ENCODE measurements at regions of chr1 and their contacts with region 1.

Region 1: GRCh38 chr1:53878492-53879105 is 11.0 kb downstream of the YIPF1 start:
- DNase-seq: peak; percentile 43
- CTCF ChIP-seq: peak; percentile 47

Region 2: GRCh38 chr1:53781654-53782053 is 96.9 kb before region 1 on chr1:
- CTCF ChIA-PET with region 1: no interaction called
- POLR2A ChIA-PET with region 1: no interaction called
- DNase-seq: no peak
- CTCF ChIP-seq: no peak

Region 3: DNA sequence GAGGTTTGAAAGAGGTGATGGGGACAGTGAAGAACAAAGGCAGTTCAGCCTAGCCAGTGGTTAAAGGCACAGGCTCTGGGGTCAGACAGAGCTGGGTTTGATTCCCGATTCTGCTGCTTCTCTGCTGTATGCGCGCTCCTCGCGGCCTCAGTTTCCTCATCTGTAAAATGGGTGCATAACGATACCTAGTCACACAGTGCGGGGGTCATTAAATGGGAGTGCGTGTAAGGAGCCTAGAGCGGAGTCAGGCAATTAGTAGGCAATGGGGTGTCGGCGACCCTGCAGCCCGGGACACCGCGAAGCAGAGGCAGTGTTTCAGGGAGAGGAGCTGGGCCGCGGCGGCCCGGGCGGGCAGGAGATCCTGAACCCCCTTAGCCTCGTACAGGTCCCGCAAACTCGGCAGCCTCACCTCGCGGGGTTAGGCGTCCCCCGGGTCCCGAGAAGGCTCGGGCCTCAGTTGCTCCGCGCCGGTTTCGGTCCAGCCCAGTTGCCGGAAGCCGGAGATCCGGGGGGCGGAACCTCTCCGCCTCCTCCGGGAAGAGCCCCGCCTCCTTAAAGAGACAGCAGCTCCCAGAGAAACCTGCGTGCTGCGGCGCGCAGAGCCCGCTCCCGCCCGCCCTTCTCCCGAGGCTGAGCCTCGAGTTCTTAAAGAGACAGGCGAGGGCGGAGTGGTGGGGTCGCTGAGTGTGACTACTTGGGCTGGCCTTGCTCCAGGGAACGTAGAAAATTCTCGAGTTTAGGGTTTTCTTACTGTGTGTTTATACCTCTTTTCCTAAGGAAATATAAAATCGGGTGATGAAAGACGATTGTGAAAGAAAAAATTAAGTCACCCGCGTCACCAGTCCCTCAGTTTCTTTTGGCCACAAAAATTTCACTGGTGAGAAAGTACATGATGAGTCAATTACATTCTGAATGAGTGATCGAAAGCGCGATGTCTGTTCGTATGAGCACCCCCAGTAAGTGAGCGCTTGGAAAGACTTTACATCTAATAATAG is 11.0 kb after region 1 on chr1 and contains the start of gene YIPF1:
- CTCF ChIA-PET with region 1: interaction called, 16 read pairs
- POLR2A ChIA-PET with region 1: no interaction called
- DNase-seq: peak; percentile 93
- CTCF ChIP-seq: no peak

Region 4: DNA sequence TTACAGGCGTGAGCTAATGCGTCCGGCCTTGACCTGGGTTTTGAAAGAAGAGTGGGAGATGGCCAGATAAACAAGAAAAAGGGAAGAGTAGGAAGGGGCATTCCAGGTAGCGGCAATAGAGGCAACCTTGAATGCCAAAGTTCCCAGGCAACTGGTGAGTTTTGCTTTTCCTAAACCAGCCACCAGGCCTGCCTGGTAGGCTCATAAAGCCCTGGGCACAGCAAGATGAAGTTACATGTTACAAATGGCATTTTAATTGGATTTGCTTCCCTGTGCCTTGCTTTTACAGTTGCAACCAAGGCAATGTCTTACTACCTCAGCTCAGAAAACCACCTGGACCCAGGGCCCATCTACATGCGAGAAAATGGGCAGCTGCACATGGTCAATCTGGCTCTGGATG is 73.1 kb after region 1 on chr1:
- CTCF ChIA-PET with region 1: interaction called, 30 read pairs
- POLR2A ChIA-PET with region 1: no interaction called
- DNase-seq: no peak
- CTCF ChIP-seq: no peak

Region 5: GRCh38 chr1:54199765-54200518 is 321.3 kb after region 1 on chr1 and contains the starts of genes CYB5RL and MRPL37:
- CTCF ChIA-PET with region 1: no interaction called
- POLR2A ChIA-PET with region 1: no interaction called
- DNase-seq: peak; percentile 98
- CTCF ChIP-seq: no peak